ENCODE measurements at regions of chr20 and their contacts with region 1.

Region 1: DNA sequence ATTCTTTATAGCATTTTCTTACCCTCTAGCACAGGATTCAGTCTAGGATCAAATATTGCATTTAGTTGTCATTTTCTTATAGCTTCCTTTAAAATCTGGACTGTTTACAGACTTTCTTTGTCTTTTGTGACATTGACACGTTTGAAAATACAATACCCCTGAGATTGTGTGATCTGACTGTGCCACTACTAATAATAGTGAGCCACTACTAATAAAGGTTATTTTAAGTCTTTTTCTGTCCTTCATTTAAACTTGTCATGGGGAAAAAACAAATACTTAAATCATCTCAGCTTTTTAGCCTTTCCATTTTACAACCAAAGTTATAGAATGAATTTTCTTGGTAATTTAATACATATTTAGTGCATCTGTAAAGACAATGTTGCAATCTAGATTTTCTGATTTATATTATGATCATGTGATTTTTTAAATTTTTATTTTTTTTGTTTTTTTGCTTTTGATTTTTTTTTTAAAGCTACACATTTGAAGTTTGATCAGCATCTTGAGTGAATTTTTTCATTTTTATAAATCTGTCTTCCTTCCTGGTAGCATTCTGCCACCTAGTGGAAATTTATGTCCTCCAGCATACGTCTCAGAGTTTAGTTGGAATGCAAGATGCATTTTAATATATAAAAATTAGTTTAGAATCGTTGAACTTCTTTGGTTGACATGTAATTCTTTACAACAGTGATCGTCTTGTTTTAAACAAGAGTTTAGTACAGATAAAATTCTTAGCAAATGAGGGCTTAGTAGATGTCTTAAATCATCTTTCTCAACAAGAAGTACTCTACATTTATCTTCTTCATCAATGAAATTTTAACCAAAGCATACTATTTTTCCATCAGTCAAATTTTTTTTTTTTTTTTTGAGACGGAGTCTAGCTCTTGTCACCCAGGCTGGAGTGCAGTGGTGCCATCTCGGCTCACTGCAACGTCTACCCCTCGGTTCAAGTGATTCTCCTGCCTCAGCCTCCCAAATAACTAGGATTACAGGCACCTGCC is 119.4 kb downstream of the NCOA3 start:
- DNase-seq: no peak
- H3K4me3 ChIP-seq: no peak overlapping the region
- H3K27ac ChIP-seq: peak overlapping the region in 1 of 2 donors; percentile 48
- H3K4me1 ChIP-seq: no peaks in the 10 kb centered on the region
- H3K27me3 ChIP-seq: no peaks in the 10 kb centered on the region
- CTCF ChIP-seq: peak; percentile 71 to 84 (median 78)
- POLR2A ChIP-seq: no peak

Region 2: GRCh38 chr20:47196091-47197081 is 424.7 kb before region 1 on chr20:
- intact Hi-C with region 1: loop called (anchors 10 kb)
- DNase-seq: peak; percentile 51 to 70
- H3K4me3 ChIP-seq: no peak overlapping the region
- H3K27ac ChIP-seq: no peak overlapping the region
- H3K4me1 ChIP-seq: no peaks in the 10 kb centered on the region
- H3K27me3 ChIP-seq: no peaks in the 10 kb centered on the region
- CTCF ChIP-seq: peak; percentile 84 to 89 (median 86)
- POLR2A ChIP-seq: no peak

Measured in uterus (tissue), 4 donors.